CD4-positive, alpha-beta memory T cell (primary cell): ENCODE measurements at regions of chr2 and their contacts with region 1.

Region 1: DNA sequence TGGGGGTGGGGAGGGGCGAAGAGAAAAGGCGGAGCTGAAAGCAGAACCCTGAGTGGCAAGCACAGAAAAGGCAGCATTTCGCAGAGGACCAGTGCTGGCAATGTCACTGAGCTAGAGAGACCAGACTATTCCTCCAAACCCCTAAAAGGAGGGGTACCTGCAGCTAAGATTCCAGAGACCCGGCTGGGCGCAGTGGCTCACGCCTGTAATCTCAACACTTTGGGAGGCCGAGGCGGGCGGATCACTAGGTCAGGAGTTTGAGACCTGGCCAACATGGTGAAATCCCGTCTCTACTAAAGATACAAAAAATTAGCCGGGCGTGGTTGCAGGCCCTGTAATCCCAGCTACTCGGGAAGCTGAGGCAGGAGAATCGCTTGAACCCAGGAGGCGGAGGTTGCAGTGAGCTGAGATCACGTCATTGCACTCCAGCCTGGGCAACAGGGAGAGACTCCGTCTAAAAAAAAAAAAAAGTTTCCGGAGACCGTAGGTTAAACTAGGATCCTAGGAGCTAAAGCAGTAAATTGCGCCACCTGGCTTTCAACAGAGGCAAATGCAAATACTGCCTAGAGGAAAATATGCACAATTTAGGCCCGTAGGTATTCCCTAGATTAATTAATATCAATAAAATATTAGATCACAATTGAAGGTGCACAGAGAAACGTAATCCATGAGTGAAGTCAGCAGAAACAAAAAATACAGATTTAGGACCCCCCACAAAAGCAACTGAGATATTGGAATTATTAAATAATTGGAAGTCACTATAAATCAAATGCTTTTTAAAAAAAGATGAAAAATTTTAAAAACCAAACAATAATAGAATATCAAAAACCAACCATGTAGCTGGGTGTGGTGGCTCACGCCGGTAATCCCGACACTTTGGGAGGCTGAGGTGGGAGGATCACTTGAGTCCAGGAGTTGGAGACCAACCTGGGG is 4.9 kb downstream of the UCN start:
- DNase-seq: peak in 4 of 5 donors; percentile 47 to 54 (median 50)
- H3K4me3 ChIP-seq: no peak overlapping the region
- H3K4me3 Mint-ChIP-seq: peak overlapping the region; percentile 64 to 84 (median 74)
- H3K27ac ChIP-seq: no peak overlapping the region
- H3K27ac Mint-ChIP-seq: peak overlapping the region in 5 of 7 donors; percentile 21 to 85 (median 75)
- H3K4me1 ChIP-seq: peaks cover 15% of the 10 kb centered on the region
- H3K4me1 Mint-ChIP-seq: peaks cover 0 to 9% (median 6%) of the 10 kb centered on the region in 4 donors
- H3K27me3 ChIP-seq: peaks cover 13% of the 10 kb centered on the region
- H3K27me3 Mint-ChIP-seq: peaks cover 18% of the 10 kb centered on the region in 2 donors

Region 2: DNA sequence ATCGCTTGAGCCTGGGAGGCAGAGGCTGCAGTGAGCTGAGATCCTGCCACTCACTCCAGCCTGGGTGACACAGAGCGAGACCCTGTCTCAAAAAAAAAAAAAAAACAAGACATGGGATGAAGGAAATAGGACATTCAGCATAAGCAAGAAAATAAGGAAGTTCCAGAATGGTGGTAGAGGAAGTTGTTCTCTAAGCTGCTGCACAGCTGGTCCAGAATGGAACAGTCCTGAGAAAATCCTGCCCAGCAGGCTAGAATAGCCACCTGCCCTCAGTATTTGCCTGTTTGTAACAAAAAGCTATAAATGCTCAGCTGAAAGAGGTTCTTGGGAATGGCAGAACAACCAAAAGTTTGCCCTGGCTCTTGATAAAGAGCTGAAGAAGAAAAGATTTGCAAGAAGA is 344.0 kb before region 1 on chr2:
- CTCF ChIA-PET with region 1: interaction called, 33 read pairs
- POLR2A ChIA-PET with region 1: no interaction called
- intact Hi-C with region 1: loop called (anchors 1 kb)
- DNase-seq: no peak
- H3K4me3 ChIP-seq: no peak overlapping the region
- H3K4me3 Mint-ChIP-seq: no peak overlapping the region
- H3K27ac ChIP-seq: no peak overlapping the region
- H3K27ac Mint-ChIP-seq: no peak overlapping the region
- H3K4me1 ChIP-seq: no peaks in the 10 kb centered on the region
- H3K4me1 Mint-ChIP-seq: peaks cover 0 to 4% (median 0%) of the 10 kb centered on the region in 4 donors
- H3K27me3 ChIP-seq: peaks cover 5% of the 10 kb centered on the region
- H3K27me3 Mint-ChIP-seq: peaks cover 19 to 21% of the 10 kb centered on the region in 2 donors

Region 3: DNA sequence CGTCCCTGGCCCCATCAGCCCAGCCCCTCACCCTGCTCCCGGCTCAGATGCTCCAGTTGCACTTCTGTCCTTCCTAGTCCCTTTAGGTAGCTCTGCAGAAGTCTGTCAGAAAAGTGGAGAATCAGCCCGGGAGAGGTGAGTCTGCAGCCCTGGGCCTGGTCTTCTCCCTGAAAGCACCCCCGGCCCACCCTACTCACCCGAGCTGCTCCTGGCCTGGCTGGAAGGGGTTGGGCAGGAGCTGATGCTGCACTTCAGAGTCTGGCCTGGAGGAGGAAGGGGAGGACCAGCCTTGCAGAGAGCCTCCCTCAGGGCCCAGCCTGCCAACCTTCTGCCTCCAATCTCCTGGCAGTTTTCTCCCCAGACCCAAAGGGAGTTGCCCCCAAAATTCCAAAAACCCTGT is 201.0 kb before region 1 on chr2:
- CTCF ChIA-PET with region 1: interaction called, 18 read pairs
- POLR2A ChIA-PET with region 1: no interaction called
- intact Hi-C with region 1: loop called (anchors 1 kb)
- DNase-seq: no peak
- H3K4me3 ChIP-seq: no peak overlapping the region
- H3K4me3 Mint-ChIP-seq: no peak overlapping the region
- H3K27ac ChIP-seq: no peak overlapping the region
- H3K27ac Mint-ChIP-seq: no peak overlapping the region
- H3K4me1 ChIP-seq: no peaks in the 10 kb centered on the region
- H3K4me1 Mint-ChIP-seq: peaks cover 0 to 3% (median 0%) of the 10 kb centered on the region in 4 donors
- H3K27me3 ChIP-seq: no peaks in the 10 kb centered on the region
- H3K27me3 Mint-ChIP-seq: peaks cover 4 to 8% of the 10 kb centered on the region in 2 donors

Region 4: DNA sequence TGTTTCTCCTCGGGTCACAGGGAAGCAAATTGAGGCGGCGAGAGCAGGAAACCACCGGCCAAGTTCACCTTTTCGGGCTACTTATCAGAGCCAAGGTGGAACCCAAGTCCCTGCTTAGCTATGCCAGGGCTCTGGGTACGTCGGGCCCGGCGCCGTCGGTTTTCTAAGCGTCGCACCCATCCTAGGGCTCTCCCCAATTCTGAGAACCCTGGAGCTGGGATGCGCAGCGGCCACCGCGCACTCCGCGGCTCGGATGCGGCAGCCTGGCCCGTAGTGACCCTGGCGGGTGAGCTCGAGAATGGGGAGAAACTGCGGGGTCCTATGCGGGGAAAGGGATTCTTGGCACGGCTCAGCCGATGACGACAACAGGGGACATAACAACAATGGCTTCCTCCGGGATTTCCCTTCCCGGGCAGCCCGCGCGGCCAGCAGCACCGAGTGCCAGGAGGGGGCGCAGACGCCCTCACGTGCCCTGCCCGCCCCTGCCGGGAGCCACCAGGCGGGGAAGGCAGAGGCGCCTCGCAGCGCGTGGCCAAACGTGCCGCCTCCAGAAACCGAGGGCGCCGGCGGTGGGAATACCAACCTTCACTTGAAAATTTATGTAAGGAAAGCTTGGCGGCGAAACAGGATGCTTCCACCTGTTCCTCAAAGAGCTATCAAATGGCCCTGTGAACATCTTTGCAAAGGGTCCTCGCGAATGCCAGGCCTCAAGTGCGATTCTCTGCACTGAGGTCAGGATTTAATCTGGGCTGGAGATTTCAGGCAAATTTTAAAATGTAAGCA is 38.4 kb before region 1 on chr2:
- CTCF ChIA-PET with region 1: interaction called, 12 read pairs
- POLR2A ChIA-PET with region 1: no interaction called
- intact Hi-C with region 1: no loop called
- DNase-seq: peak; percentile 39 to 73 (median 50)
- H3K4me3 ChIP-seq: peak overlapping the region in 1 of 2 donors; percentile 47
- H3K4me3 Mint-ChIP-seq: peak overlapping the region; percentile 70 to 94 (median 83)
- H3K27ac ChIP-seq: no peak overlapping the region
- H3K27ac Mint-ChIP-seq: peak overlapping the region in 3 of 7 donors; percentile 21 to 54 (median 52)
- H3K4me1 ChIP-seq: peaks cover 23% of the 10 kb centered on the region
- H3K4me1 Mint-ChIP-seq: peaks cover 23 to 38% (median 25%) of the 10 kb centered on the region in 4 donors
- H3K27me3 ChIP-seq: peaks cover 31% of the 10 kb centered on the region
- H3K27me3 Mint-ChIP-seq: peaks cover 35 to 38% of the 10 kb centered on the region in 2 donors

Region 5: DNA sequence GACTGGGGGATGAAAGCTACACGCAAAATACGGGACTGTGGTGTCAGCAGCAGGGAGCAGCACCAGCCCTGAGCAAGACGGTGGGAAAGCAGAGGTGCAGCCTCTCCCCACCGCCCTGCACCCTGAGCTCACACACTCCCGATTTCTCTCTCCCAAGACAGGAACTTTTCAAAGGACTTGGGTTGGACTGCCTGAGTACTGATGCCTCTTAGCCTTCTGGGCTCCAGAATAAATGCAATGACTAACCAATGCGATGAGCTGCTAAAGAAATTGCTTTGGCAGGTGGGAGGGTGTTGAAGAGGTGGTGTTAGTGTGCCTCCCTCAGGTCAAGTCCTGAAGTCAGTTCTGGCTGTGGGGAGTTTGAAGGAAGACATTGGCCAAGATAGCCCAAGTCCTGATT is 11.5 kb before region 1 on chr2:
- CTCF ChIA-PET with region 1: interaction called, 41 read pairs
- POLR2A ChIA-PET with region 1: no interaction called
- intact Hi-C with region 1: no loop called
- DNase-seq: no peak
- H3K4me3 ChIP-seq: no peak overlapping the region
- H3K4me3 Mint-ChIP-seq: no peak overlapping the region
- H3K27ac ChIP-seq: no peak overlapping the region
- H3K27ac Mint-ChIP-seq: no peak overlapping the region
- H3K4me1 ChIP-seq: no peaks in the 10 kb centered on the region
- H3K4me1 Mint-ChIP-seq: no peaks in the 10 kb centered on the region
- H3K27me3 ChIP-seq: no peaks in the 10 kb centered on the region
- H3K27me3 Mint-ChIP-seq: peaks cover 18 to 22% of the 10 kb centered on the region in 2 donors

Region 6: GRCh38 chr2:27322766-27323595 is 19.6 kb after region 1 on chr2 and contains the start of gene MPV17:
- CTCF ChIA-PET with region 1: interaction called, 29 read pairs
- POLR2A ChIA-PET with region 1: interaction called, 4 read pairs
- intact Hi-C with region 1: no loop called
- DNase-seq: peak; percentile 82 to 89 (median 82)
- H3K4me3 ChIP-seq: peak within 1 kb of the TSS; percentile 81 to 97
- H3K4me3 Mint-ChIP-seq: peak within 1 kb of the TSS; percentile 95 to 100 (median 96)
- H3K27ac ChIP-seq: peak within 1 kb of the TSS; percentile 95
- H3K27ac Mint-ChIP-seq: peak within 1 kb of the TSS; percentile 96 to 100 (median 98)
- H3K4me1 ChIP-seq: peaks cover 25% of the 10 kb centered on the region
- H3K4me1 Mint-ChIP-seq: peaks cover 12 to 28% (median 18%) of the 10 kb centered on the region in 4 donors
- H3K27me3 ChIP-seq: no peaks in the 10 kb centered on the region
- H3K27me3 Mint-ChIP-seq: no peaks in the 10 kb centered on the region
- total RNA-seq, gene MPV17: 89.3 to 93.3 TPM

Region 7: GRCh38 chr2:27335311-27335710 is 32.0 kb after region 1 on chr2:
- CTCF ChIA-PET with region 1: no interaction called
- POLR2A ChIA-PET with region 1: no interaction called
- intact Hi-C with region 1: no loop called
- DNase-seq: no peak
- H3K4me3 ChIP-seq: no peak overlapping the region
- H3K4me3 Mint-ChIP-seq: no peak overlapping the region
- H3K27ac ChIP-seq: no peak overlapping the region
- H3K27ac Mint-ChIP-seq: peak overlapping the region in 3 of 7 donors; percentile 33 to 56 (median 36)
- H3K4me1 ChIP-seq: no peaks in the 10 kb centered on the region
- H3K4me1 Mint-ChIP-seq: no peaks in the 10 kb centered on the region
- H3K27me3 ChIP-seq: no peaks in the 10 kb centered on the region
- H3K27me3 Mint-ChIP-seq: no peaks in the 10 kb centered on the region

Region 8: GRCh38 chr2:27380626-27381545 is 77.5 kb after region 1 on chr2 and contains the start of gene ZNF513:
- CTCF ChIA-PET with region 1: no interaction called
- POLR2A ChIA-PET with region 1: no interaction called
- intact Hi-C with region 1: no loop called
- DNase-seq: peak; percentile 81 to 89 (median 83)
- H3K4me3 ChIP-seq: peak within 1 kb of the TSS; percentile 66 to 79
- H3K4me3 Mint-ChIP-seq: peak within 1 kb of the TSS; percentile 89 to 93 (median 90)
- H3K27ac ChIP-seq: peak within 1 kb of the TSS; percentile 78
- H3K27ac Mint-ChIP-seq: peak within 1 kb of the TSS; percentile 92 to 97 (median 95)
- H3K4me1 ChIP-seq: peaks cover 20% of the 10 kb centered on the region
- H3K4me1 Mint-ChIP-seq: peaks cover 15 to 36% (median 25%) of the 10 kb centered on the region in 4 donors
- H3K27me3 ChIP-seq: no peaks in the 10 kb centered on the region
- H3K27me3 Mint-ChIP-seq: no peaks in the 10 kb centered on the region
- total RNA-seq, gene ZNF513: 17.6 to 20.1 TPM

Region 9: GRCh38 chr2:27453967-27454366 is 150.6 kb after region 1 on chr2:
- CTCF ChIA-PET with region 1: no interaction called
- POLR2A ChIA-PET with region 1: no interaction called
- intact Hi-C with region 1: no loop called
- DNase-seq: no peak
- H3K4me3 ChIP-seq: no peak overlapping the region
- H3K4me3 Mint-ChIP-seq: no peak overlapping the region
- H3K27ac ChIP-seq: no peak overlapping the region
- H3K27ac Mint-ChIP-seq: peak overlapping the region in 1 of 7 donors; percentile 4
- H3K4me1 ChIP-seq: no peaks in the 10 kb centered on the region
- H3K4me1 Mint-ChIP-seq: peaks cover 0 to 1% (median 0%) of the 10 kb centered on the region in 4 donors
- H3K27me3 ChIP-seq: no peaks in the 10 kb centered on the region
- H3K27me3 Mint-ChIP-seq: no peaks in the 10 kb centered on the region